Activated CD8-positive, alpha-beta T cell treated with anti-CD3 and anti-CD28 coated beads, Interleukin-2, amount 10 ng/mL, durations not matched to agents 7 days and 5 days (primary cell): ENCODE measurements at regions of chr11 and their contacts with region 1.

Region 1: DNA sequence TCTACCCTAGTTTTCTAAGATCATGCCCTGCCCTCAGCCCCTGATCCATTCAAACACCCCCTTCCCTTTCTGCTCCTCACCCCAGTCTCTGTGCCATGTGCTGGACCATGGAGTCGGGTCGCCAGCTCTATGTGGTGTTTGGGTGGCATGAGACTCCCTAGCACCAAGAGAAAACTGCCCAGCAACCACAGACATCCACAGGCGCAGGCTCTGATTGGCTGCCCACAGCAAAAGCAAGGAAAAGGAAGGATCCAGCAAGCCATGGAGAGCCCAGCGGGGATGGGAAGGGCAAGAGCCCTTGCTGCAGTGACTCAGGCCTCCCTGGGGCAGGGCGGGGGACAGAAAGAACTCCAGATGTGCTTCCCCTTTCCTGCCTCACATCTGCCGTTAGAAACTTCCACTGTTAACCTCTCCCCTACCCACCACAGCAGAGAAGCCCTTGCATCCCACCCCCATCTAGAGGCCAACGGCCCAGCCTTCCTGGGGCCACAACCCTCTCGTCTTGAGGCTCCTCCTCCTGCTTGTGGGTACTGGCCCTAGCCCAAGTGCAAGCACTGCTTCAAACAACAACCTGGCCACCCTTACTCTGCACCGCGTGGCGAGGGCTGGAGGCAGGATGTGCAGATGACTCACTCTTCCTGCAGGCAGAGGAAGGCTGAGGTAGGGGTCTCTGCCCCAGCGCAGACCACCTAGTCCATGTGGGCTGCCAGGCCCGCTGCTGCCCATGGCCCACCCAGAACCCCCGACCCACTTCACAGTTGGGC is 9.7 kb upstream of the AHNAK start:
- DNase-seq: peak; percentile 94
- ATAC-seq: peak; percentile 72
- H3K4me3 Mint-ChIP-seq: peak overlapping the region; percentile 66
- H3K27ac Mint-ChIP-seq: peak overlapping the region; percentile 95
- H3K4me1 Mint-ChIP-seq: peaks cover 95% of the 10 kb centered on the region
- H3K27me3 Mint-ChIP-seq: no peaks in the 10 kb centered on the region

Region 2: DNA sequence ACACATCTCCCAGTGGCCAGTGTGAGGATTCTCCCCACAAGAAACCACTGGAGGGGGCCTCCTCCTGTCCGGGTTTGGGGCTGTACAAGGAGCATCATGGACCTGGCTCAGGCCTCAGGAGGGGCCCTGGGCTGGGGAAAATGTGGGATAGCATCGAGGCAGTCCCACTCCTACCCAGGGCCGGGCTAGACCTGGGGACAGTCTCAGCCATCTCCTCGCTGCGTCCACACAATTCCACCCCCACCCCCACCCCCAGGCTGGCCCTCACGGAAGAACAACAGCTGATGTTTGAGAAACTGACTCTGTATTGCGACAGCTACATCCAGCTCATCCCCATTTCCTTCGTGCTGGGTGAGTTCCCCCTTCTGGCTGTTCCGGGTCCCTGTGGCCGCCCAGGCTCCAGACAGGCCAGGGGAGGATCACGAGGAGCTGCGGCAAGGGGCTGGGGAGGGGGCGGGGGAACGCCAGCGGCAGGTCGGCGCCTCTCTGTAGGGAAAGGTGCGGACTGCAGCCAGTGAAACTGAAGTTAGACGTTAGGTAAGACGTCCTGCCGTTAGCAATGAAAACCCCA is 601.4 kb before region 1 on chr11:
- CTCF ChIA-PET with region 1: no interaction called
- POLR2A ChIA-PET with region 1: no interaction called
- DNase-seq: peak; percentile 21
- ATAC-seq: no peak
- H3K4me3 Mint-ChIP-seq: no peak overlapping the region
- H3K27ac Mint-ChIP-seq: no peak overlapping the region
- H3K4me1 Mint-ChIP-seq: peaks cover 8% of the 10 kb centered on the region
- H3K27me3 Mint-ChIP-seq: peaks cover 22% of the 10 kb centered on the region

Region 3: DNA sequence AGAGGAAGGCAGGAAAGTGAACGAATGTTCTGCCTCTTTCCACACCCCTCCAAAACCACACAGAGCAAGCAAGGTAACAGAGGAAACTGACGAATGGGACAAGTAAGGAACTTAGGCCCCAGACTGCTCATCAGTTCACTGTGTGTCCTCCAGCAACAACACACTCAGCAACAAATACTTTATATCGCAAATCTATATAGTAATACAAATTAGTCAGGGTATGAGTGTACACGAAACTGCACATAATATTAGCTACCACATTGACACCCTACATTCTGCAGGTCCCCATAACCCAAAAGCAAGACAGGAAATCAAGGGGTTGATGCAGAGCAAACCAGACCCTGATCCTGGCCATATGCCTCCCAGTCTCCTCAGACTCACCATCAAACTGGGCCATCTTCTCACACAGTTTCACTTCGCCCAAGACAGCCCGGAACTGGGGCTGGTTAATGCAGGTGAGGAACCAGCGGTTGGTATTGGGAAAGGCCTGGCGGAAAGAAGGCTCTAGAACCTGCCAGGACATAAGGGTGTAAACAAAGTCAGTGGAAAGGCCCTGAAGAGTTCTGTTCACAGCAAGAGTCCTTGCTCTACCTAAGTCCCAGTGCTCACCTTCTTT is 10.8 kb after region 1 on chr11:
- CTCF ChIA-PET with region 1: interaction called, 37 read pairs
- POLR2A ChIA-PET with region 1: interaction called, 19 read pairs
- DNase-seq: no peak
- ATAC-seq: peak; percentile 18
- H3K4me3 Mint-ChIP-seq: no peak overlapping the region
- H3K27ac Mint-ChIP-seq: peak overlapping the region; percentile 32
- H3K4me1 Mint-ChIP-seq: peaks cover 51% of the 10 kb centered on the region
- H3K27me3 Mint-ChIP-seq: no peaks in the 10 kb centered on the region

Region 4: DNA sequence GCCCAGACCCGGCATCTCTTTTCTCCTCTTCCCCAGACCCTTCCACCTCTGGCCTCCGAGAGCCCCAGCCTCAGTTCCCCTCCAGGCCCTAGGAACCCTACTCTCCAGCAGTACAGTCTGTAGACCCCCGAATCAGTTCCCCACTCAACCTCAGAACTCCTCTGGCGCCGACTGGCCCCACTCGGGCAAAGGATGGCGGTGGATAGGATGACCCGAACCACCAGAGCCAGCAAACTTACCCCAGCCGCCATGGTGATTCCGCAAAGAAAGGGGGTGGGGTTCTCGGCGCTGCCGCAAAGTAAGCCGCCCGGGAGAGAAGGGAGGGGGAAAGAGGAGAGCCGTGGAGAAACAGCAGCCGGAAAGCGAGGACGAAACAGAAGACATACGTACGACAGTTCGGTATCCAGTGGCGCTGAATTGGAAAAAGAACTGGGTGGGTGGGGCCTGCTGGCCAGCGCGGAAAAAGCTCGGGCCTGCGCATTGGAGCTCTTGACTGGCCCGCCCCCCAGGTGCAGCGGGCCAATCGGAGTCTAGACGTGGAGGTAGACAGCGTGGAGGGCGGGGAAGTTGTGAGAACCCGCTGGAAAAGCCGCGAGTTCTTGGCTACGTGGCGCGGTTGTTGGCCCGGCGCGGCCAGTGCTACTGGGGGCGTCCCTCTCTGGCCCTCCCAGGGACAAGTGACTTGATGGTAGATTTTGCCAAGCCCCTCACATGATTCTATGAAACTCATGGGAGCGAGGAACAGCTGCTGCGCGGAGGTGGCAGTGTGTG is 17.5 kb after region 1 on chr11 and contains the start of gene EEF1G:
- CTCF ChIA-PET with region 1: interaction called, 37 read pairs
- POLR2A ChIA-PET with region 1: interaction called, 19 read pairs
- DNase-seq: peak; percentile 100
- ATAC-seq: peak; percentile 96
- H3K4me3 Mint-ChIP-seq: peak within 1 kb of the TSS; percentile 99
- H3K27ac Mint-ChIP-seq: peak within 1 kb of the TSS; percentile 97
- H3K4me1 Mint-ChIP-seq: peaks cover 53% of the 10 kb centered on the region
- H3K27me3 Mint-ChIP-seq: no peaks in the 10 kb centered on the region
- total RNA-seq, gene EEF1G: 1,058 to 1,098 TPM